B cell (primary cell): ENCODE measurements at regions of chr10 and their contacts with region 1.

Region 1: DNA sequence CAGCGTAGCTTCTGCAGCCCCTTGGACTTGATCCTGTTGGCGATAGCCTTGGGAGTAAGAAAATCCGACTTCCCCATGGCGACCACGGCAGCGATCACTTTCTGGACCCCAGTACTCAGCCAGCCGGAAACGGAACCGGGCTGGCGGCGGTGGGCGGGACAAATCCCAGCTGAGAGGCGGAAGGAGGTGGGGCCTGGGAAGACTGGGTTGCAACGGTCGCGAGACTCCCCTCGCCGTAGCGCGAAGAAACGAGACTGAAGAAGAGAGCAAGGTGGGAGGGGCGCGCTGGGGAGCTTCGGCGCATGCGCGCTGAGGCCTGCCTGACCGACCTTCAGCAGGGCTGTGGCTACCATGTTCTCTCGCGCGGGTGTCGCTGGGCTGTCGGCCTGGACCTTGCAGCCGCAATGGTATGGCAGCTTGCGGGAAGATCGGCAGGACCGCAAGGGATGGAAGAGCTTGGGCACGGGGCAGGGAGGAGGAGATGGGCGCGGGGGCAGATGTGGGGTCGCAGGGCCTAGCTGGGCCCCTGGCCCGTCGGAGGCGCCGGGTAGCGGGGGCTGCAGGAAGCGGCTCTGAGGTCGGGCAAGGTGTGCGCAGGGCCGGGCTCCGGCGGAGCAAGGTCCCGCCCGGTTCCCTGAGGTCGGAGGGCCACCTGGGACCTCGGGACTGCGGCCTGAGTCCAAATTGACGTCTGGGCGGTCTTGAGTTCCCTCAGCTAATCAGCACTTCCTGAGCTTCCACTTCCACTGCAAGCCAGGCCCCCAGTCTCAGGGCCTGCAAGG is at the starts of genes ATP5F1C and KIN:
- DNase-seq: peak; percentile 98
- ATAC-seq: peak; percentile 98
- H3K4me3 ChIP-seq: peak within 1 kb of the TSS; percentile 87 to 95 (median 87)
- H3K4me3 Mint-ChIP-seq: no peak within 1 kb of the TSS
- H3K27ac ChIP-seq: peak within 1 kb of the TSS; percentile 50 to 75
- H3K27ac Mint-ChIP-seq: peak within 1 kb of the TSS; percentile 47
- H3K4me1 ChIP-seq: peaks cover 26 to 28% of the 10 kb centered on the region in 2 donors
- H3K4me1 Mint-ChIP-seq: peaks cover 51% of the 10 kb centered on the region
- H3K27me3 ChIP-seq: no peaks in the 10 kb centered on the region
- H3K27me3 Mint-ChIP-seq: no peaks in the 10 kb centered on the region
- CTCF ChIP-seq: no peak
- total RNA-seq, gene ATP5F1C: 110 and 114 TPM in 2 replicates
- total RNA-seq, gene KIN: 16.5 and 17.3 TPM in 2 replicates

Region 2: DNA sequence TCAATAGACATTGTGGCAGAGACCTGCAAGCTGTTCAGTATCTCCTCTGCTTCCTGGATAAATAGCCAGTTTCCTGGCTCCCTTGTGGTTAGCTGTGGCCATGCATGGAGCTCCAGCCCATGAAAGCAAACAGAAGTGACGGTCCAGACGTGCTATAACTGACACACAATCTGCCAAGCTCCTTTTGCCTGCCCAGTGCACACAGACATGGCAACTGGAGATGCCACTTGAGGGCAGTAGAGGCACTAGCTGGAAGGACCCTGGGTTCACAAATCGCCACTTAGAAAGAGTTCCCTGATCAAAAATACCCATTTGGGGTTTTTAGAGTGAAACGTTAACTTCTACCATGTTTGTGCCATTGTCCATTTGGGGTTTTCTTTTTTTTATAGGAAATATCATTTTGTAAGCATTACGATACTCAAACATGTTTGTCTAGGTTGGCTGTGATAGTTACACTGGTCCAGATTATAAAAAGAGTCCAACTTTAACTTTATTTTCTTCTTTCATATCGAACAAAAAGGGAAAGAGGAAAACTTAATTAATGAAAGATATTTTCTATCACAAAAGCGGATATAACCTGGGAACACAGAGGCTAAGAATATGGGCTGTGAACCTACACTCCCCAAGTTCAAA is 31.6 kb before region 1 on chr10:
- CTCF ChIA-PET with region 1: no interaction called
- POLR2A ChIA-PET with region 1: no interaction called
- intact Hi-C with region 1: no loop called
- DNase-seq: peak; percentile 16
- ATAC-seq: no peak
- H3K4me3 ChIP-seq: no peak overlapping the region
- H3K4me3 Mint-ChIP-seq: no peak overlapping the region
- H3K27ac ChIP-seq: no peak overlapping the region
- H3K27ac Mint-ChIP-seq: no peak overlapping the region
- H3K4me1 ChIP-seq: no peaks in the 10 kb centered on the region
- H3K4me1 Mint-ChIP-seq: no peaks in the 10 kb centered on the region
- H3K27me3 ChIP-seq: no peaks in the 10 kb centered on the region
- H3K27me3 Mint-ChIP-seq: no peaks in the 10 kb centered on the region
- CTCF ChIP-seq: no peak

Region 3: GRCh38 chr10:7818295-7819122 is 30.5 kb after region 1 on chr10 and contains the start of gene TAF3:
- CTCF ChIA-PET with region 1: interaction called, 15 read pairs
- POLR2A ChIA-PET with region 1: interaction called, 38 read pairs
- intact Hi-C with region 1: loop called (anchors 1 kb)
- DNase-seq: peak; percentile 93
- ATAC-seq: peak; percentile 94
- H3K4me3 ChIP-seq: peak within 1 kb of the TSS; percentile 82 to 97 (median 92)
- H3K4me3 Mint-ChIP-seq: peak within 1 kb of the TSS; percentile 94
- H3K27ac ChIP-seq: peak within 1 kb of the TSS; percentile 62 to 73
- H3K27ac Mint-ChIP-seq: peak within 1 kb of the TSS; percentile 79
- H3K4me1 ChIP-seq: peaks cover 12 to 19% of the 10 kb centered on the region in 2 donors
- H3K4me1 Mint-ChIP-seq: peaks cover 29% of the 10 kb centered on the region
- H3K27me3 ChIP-seq: peaks cover 0 to 16% (median 1%) of the 10 kb centered on the region in 4 experiments
- H3K27me3 Mint-ChIP-seq: peaks cover 20% of the 10 kb centered on the region
- CTCF ChIP-seq: no peak
- total RNA-seq, gene TAF3: 20.1 and 20.2 TPM in 2 replicates